ENCODE measurements at regions of chr3 and their contacts with region 1.

Region 1: GRCh38 chr3:130276203-130276803 is 69.2 kb upstream of the COL6A5 start:
- DNase-seq: peak in 1 of 2 experiments; percentile 39
- H3K4me3 ChIP-seq: no peak overlapping the region
- H3K4me3 Mint-ChIP-seq: no peak overlapping the region
- H3K27ac Mint-ChIP-seq: no peak overlapping the region
- H3K4me1 ChIP-seq: no peaks in the 10 kb centered on the region
- H3K4me1 Mint-ChIP-seq: no peaks in the 10 kb centered on the region
- H3K27me3 ChIP-seq: no peaks in the 10 kb centered on the region
- H3K27me3 Mint-ChIP-seq: peaks cover 8% of the 10 kb centered on the region
- CTCF ChIP-seq: peak; percentile 64 to 90

Region 2: DNA sequence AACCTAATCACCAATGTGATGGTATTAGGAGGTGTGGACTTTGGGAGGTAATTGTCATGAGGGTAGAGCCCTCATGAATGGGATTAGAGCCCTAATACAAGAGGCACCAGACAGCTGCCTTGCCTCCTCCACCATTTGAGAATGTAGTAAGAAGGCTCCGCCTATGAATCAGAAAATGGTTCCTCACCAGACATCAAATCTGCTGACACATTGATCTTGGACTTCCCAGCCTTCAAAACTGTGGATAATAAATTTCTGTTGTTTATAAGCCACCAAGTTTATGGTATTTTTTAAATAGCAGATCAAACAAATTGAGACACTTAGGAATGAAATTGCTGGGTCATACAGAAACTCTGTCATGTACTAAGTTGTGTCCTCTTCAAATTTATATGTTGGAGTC is 12.4 kb after region 1 on chr3:
- CTCF ChIA-PET with region 1: no interaction called
- POLR2A ChIA-PET with region 1: no interaction called
- intact Hi-C with region 1: no loop called
- DNase-seq: no peak
- H3K4me3 ChIP-seq: no peak overlapping the region
- H3K4me3 Mint-ChIP-seq: no peak overlapping the region
- H3K27ac Mint-ChIP-seq: no peak overlapping the region
- H3K4me1 ChIP-seq: no peaks in the 10 kb centered on the region
- H3K4me1 Mint-ChIP-seq: no peaks in the 10 kb centered on the region
- H3K27me3 ChIP-seq: no peaks in the 10 kb centered on the region
- H3K27me3 Mint-ChIP-seq: peaks cover 13% of the 10 kb centered on the region
- CTCF ChIP-seq: no peak

Region 3: GRCh38 chr3:130411320-130411719 is 135.0 kb after region 1 on chr3:
- CTCF ChIA-PET with region 1: no interaction called
- POLR2A ChIA-PET with region 1: no interaction called
- intact Hi-C with region 1: no loop called
- DNase-seq: no peak
- H3K4me3 ChIP-seq: no peak overlapping the region
- H3K4me3 Mint-ChIP-seq: no peak overlapping the region
- H3K27ac Mint-ChIP-seq: no peak overlapping the region
- H3K4me1 ChIP-seq: no peaks in the 10 kb centered on the region
- H3K4me1 Mint-ChIP-seq: no peaks in the 10 kb centered on the region
- H3K27me3 ChIP-seq: no peaks in the 10 kb centered on the region
- H3K27me3 Mint-ChIP-seq: no peaks in the 10 kb centered on the region
- CTCF ChIP-seq: no peak

Region 4: DNA sequence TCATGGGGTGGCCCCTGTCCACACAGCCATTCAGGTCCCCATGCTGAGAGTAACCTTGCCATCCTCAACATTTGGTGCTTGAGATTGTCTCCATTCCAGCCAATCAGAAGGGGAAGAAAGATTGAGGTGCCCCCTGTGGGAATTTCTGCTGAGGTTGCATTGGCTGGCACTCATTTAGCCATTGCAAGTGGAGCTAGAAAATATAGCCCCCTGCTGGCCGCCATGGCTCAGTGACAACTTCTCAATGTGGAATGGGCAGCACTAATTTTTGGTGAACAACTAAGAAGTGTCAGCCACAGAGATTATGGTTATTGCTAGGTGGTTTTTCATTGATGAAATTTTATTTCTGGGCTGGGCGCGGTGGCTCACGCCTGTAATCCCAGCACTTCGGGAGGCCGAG is 262.7 kb after region 1 on chr3:
- CTCF ChIA-PET with region 1: interaction called, 24 read pairs
- POLR2A ChIA-PET with region 1: no interaction called
- intact Hi-C with region 1: loop called (anchors 1 kb)
- DNase-seq: peak; percentile 47 to 58
- H3K4me3 ChIP-seq: no peak overlapping the region
- H3K4me3 Mint-ChIP-seq: no peak overlapping the region
- H3K27ac Mint-ChIP-seq: no peak overlapping the region
- H3K4me1 ChIP-seq: no peaks in the 10 kb centered on the region
- H3K4me1 Mint-ChIP-seq: no peaks in the 10 kb centered on the region
- H3K27me3 ChIP-seq: no peaks in the 10 kb centered on the region
- H3K27me3 Mint-ChIP-seq: peaks cover 20% of the 10 kb centered on the region
- CTCF ChIP-seq: peak; percentile 81 to 86

Region 5: DNA sequence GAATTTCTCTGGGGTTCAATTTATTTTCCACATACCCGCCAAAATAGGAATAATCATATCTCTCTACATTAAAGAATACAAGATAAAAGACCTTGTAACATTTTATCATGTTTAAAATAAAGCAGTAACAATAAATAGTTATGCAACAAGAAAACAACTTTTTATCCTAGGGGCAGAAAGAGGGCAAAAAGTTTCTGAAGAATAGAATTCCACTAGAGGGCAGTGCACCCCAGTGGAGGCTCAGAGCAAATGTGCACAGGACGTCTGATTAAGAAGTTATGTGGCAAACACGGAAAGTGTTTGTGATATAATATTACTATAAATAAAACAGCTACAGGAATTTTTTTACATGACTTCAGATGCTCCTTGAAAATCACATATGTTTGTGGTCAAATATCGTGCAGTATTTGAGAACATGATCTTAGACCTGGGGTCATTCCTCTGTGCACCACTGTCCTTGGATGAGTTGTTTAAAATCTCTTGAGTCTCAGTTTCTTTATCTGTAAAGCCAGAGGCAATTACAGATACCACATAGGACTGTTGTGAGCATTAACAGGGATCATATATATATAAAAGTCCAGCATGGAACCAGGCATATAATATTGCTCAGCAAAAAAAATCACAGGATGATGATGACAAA is 483.5 kb after region 1 on chr3:
- CTCF ChIA-PET with region 1: no interaction called
- POLR2A ChIA-PET with region 1: no interaction called
- intact Hi-C with region 1: loop called (anchors 10 kb)
- DNase-seq: peak; percentile 34 to 65
- H3K4me3 ChIP-seq: no peak overlapping the region
- H3K4me3 Mint-ChIP-seq: no peak overlapping the region
- H3K27ac Mint-ChIP-seq: no peak overlapping the region
- H3K4me1 ChIP-seq: no peaks in the 10 kb centered on the region
- H3K4me1 Mint-ChIP-seq: no peaks in the 10 kb centered on the region
- H3K27me3 ChIP-seq: no peaks in the 10 kb centered on the region
- H3K27me3 Mint-ChIP-seq: no peaks in the 10 kb centered on the region
- CTCF ChIP-seq: peak; percentile 71 to 72

Measured in Caco-2 (cell line).